ENCODE measurements at regions of chr18 and their contacts with region 1.

Region 1: GRCh38 chr18:46281185-46282176 is 177.3 kb downstream of the HAUS1 start:
- DNase-seq: peak; percentile 10 to 66 (median 56)
- ATAC-seq: peak; percentile 93
- H3K4me3 ChIP-seq: no peak overlapping the region
- H3K4me3 Mint-ChIP-seq: no peak overlapping the region
- H3K27ac ChIP-seq: no peak overlapping the region
- H3K27ac Mint-ChIP-seq: no peak overlapping the region
- H3K4me1 ChIP-seq: no peaks in the 10 kb centered on the region
- H3K4me1 Mint-ChIP-seq: peaks cover 13% of the 10 kb centered on the region
- H3K27me3 ChIP-seq: no peaks in the 10 kb centered on the region
- H3K27me3 Mint-ChIP-seq: no peaks in the 10 kb centered on the region
- CTCF ChIP-seq: peak; percentile 81

Region 2: GRCh38 chr18:46481048-46481846 is 199.8 kb after region 1 on chr18:
- CTCF ChIA-PET with region 1: interaction called, 22 read pairs
- POLR2A ChIA-PET with region 1: no interaction called
- intact Hi-C with region 1: loop called (anchors 2 to 10 kb)
- DNase-seq: peak; percentile 8 to 69 (median 56)
- ATAC-seq: peak; percentile 64
- H3K4me3 ChIP-seq: no peak overlapping the region
- H3K4me3 Mint-ChIP-seq: no peak overlapping the region
- H3K27ac ChIP-seq: no peak overlapping the region
- H3K27ac Mint-ChIP-seq: no peak overlapping the region
- H3K4me1 ChIP-seq: no peaks in the 10 kb centered on the region
- H3K4me1 Mint-ChIP-seq: no peaks in the 10 kb centered on the region
- H3K27me3 ChIP-seq: no peaks in the 10 kb centered on the region
- H3K27me3 Mint-ChIP-seq: peaks cover 13% of the 10 kb centered on the region
- CTCF ChIP-seq: peak; percentile 68

Region 3: GRCh38 chr18:46622999-46623398 is 341.5 kb after region 1 on chr18:
- CTCF ChIA-PET with region 1: interaction called, 12 read pairs
- POLR2A ChIA-PET with region 1: interaction called, 3 read pairs
- intact Hi-C with region 1: no loop called
- DNase-seq: peak in 1 of 9 experiments; percentile 17
- ATAC-seq: no peak
- H3K4me3 ChIP-seq: no peak overlapping the region
- H3K4me3 Mint-ChIP-seq: peak overlapping the region; percentile 26
- H3K27ac ChIP-seq: peak overlapping the region in 1 of 2 experiments; percentile 34
- H3K27ac Mint-ChIP-seq: peak overlapping the region; percentile 92
- H3K4me1 ChIP-seq: peaks cover 35% of the 10 kb centered on the region
- H3K4me1 Mint-ChIP-seq: peaks cover 50% of the 10 kb centered on the region
- H3K27me3 ChIP-seq: no peaks in the 10 kb centered on the region
- H3K27me3 Mint-ChIP-seq: no peaks in the 10 kb centered on the region
- CTCF ChIP-seq: no peak

Measured in CD8-positive, alpha-beta T cell (primary cell).